Heart right ventricle (tissue), 16 donors: ENCODE measurements at regions of chr5 and their contacts with region 1.

Region 1: DNA sequence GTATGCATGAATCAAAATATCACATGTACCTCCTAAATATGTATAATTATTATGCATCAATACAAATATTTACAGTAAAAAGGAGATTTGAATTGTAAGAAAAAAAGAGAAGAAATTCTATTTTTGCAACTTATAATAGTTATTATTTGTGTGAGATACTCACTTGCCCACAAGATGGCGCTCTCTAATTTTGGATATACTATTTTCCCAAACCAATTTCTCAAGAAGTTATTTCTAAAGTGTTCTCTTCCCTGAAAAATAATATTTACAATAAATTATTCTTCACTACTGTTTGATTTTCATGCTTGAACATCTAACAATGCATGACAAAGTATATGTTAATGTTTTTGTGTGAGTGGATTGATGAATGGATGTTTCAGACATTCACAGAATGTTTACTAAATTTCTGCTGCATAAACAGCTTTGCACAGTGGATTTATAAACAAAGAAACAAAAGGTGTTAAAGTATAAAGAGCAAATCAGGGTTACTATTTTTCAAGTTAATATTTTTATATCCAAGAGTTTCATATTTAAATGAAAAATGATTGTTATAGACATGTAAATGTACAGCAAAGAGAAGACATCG is 503.4 kb downstream of the PDE4D start:
- DNase-seq: peak in 1 of 2 donors; percentile 23
- ATAC-seq: no peak
- H3K4me3 ChIP-seq: no peak overlapping the region
- H3K27ac ChIP-seq: no peak overlapping the region
- H3K4me1 ChIP-seq: no peaks in the 10 kb centered on the region
- H3K27me3 ChIP-seq: no peaks in the 10 kb centered on the region
- CTCF ChIP-seq: peak; percentile 56 to 85 (median 76)

Region 2: DNA sequence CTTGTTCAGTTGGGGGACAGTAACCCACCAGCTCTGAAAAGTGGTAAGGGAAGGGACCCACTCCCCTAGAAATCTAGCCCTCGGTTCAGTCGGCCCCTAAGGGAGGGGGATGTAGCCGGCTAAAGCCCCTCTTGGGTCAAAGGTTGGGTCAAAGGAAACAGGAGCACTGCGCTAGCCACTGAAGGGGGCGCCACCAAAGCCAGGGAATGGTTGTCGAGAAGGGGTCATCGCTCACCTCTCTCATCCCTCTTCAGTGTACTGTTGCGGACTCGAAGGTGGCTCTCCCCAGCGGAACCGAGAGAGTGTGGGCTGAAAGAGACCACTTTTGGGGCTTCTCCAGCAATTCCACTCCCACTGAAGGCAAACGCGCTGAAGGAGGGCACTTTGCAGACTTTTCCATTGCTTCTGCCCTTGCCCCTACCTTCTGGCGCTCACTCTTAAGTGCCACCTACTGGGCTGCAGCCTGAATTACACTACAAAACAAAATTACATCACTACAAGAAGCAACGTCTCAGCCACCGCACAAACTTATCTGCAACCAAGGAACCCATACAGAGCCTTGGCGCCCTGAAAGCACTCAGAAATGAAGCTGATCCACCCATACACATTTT is 106.5 kb after region 1 on chr5:
- intact Hi-C with region 1: loop called in 1 of 10 experiments (anchors 10 kb)
- DNase-seq: no peak
- ATAC-seq: no peak
- H3K4me3 ChIP-seq: no peak overlapping the region
- H3K27ac ChIP-seq: no peak overlapping the region
- H3K4me1 ChIP-seq: no peaks in the 10 kb centered on the region
- H3K27me3 ChIP-seq: no peaks in the 10 kb centered on the region
- CTCF ChIP-seq: peak in 5 of 9 donors; percentile 10 to 38 (median 23)

Region 3: GRCh38 chr5:59660737-59661136 is 270.6 kb after region 1 on chr5:
- intact Hi-C with region 1: loop called in 3 of 10 experiments (anchors 5 kb)
- DNase-seq: no peak
- ATAC-seq: no peak
- H3K4me3 ChIP-seq: no peak overlapping the region
- H3K27ac ChIP-seq: no peak overlapping the region
- H3K4me1 ChIP-seq: peaks cover 0 to 17% (median 4%) of the 10 kb centered on the region in 9 donors
- H3K27me3 ChIP-seq: no peaks in the 10 kb centered on the region
- CTCF ChIP-seq: peak in 6 of 9 donors; percentile 27 to 50 (median 38)

Region 4: DNA sequence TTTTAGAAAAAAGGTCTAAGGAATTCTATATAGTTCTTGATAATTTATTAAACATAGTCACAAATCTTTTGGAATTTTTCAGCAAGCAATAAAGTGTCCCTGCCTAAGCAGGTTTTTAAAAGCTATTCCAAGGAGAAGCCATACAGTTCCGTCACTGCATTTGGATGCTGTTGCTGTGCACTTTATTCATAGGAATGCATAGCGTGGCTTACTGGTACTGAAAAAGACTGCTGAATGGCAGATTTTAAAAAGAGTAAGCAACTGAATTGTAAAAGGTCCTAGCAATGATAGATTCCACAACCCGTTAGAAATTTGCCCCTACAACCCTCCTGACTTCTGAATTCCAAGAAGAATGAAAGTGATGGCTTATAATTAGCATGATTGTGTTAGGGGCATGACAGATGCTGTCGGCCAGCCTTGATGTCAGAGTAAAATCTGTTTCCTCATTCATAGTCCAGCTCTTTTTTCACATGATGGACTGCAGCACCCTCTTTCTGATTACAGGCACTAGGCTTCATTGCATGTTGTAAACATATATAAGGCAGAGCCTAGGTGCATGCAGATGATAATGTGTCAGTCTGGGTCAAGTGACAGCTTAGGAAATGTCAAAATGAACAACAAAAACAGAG is 276.4 kb after region 1 on chr5:
- intact Hi-C with region 1: loop called in 5 of 10 experiments (anchors 5 kb)
- DNase-seq: no peak
- ATAC-seq: no peak
- H3K4me3 ChIP-seq: no peak overlapping the region
- H3K27ac ChIP-seq: no peak overlapping the region
- H3K4me1 ChIP-seq: peaks cover 0 to 12% (median 4%) of the 10 kb centered on the region in 9 donors
- H3K27me3 ChIP-seq: no peaks in the 10 kb centered on the region
- CTCF ChIP-seq: no peak

Region 5: GRCh38 chr5:59673438-59674058 is 283.4 kb after region 1 on chr5:
- intact Hi-C with region 1: loop called in 9 of 10 experiments (anchors 2 to 5 kb)
- DNase-seq: no peak
- ATAC-seq: no peak
- H3K4me3 ChIP-seq: no peak overlapping the region
- H3K27ac ChIP-seq: no peak overlapping the region
- H3K4me1 ChIP-seq: no peaks in the 10 kb centered on the region
- H3K27me3 ChIP-seq: no peaks in the 10 kb centered on the region
- CTCF ChIP-seq: peak; percentile 70 to 88 (median 84)

Region 6: GRCh38 chr5:59799668-59800346 is 409.6 kb after region 1 on chr5:
- intact Hi-C with region 1: loop called in 9 of 10 experiments (anchors 1 to 5 kb)
- DNase-seq: no peak
- ATAC-seq: peak in 7 of 8 donors; percentile 65 to 83 (median 75)
- H3K4me3 ChIP-seq: peak overlapping the region in 5 of 10 donors; percentile 2 to 30 (median 11)
- H3K27ac ChIP-seq: peak overlapping the region in 7 of 10 donors; percentile 1 to 43 (median 23)
- H3K4me1 ChIP-seq: peaks cover 0 to 28% (median 15%) of the 10 kb centered on the region in 9 donors
- H3K27me3 ChIP-seq: no peaks in the 10 kb centered on the region
- CTCF ChIP-seq: peak; percentile 57 to 86 (median 80)

Region 7: GRCh38 chr5:60417500-60418181 is 1027.5 kb after region 1 on chr5:
- intact Hi-C with region 1: no loop called
- DNase-seq: no peak
- ATAC-seq: no peak
- H3K4me3 ChIP-seq: no peak overlapping the region
- H3K27ac ChIP-seq: no peak overlapping the region
- H3K4me1 ChIP-seq: no peaks in the 10 kb centered on the region
- H3K27me3 ChIP-seq: no peaks in the 10 kb centered on the region
- CTCF ChIP-seq: no peak